ENCODE measurements at regions of chr2 and their contacts with region 1.

Region 1: GRCh38 chr2:61898810-61899209 is 6.7 kb upstream of the COMMD1 start:
- DNase-seq: peak; percentile 29
- H3K4me3 Mint-ChIP-seq: no peak overlapping the region
- H3K27ac Mint-ChIP-seq: no peak overlapping the region
- H3K4me1 Mint-ChIP-seq: no peaks in the 10 kb centered on the region
- H3K27me3 Mint-ChIP-seq: no peaks in the 10 kb centered on the region
- CTCF ChIP-seq: peak; percentile 37

Region 2: DNA sequence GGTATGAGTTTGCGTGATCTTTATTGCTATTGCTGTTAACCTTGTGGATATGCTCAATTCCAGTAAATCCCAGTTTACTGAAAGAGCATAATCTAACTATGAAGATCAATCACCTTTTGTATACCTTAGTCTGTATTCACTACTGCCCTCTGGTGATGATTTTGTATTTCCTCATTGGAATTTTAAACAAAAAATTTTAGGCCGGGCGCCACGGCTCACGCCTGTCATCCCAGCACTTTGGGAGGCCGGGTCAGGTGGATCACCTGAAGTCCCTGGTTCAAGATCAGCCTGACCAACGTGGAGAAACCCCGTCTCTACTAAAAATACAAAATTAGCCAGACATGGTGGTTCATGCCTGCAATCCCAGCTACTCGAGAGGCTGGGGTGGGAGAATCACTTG is 11.8 kb after region 1 on chr2:
- CTCF ChIA-PET with region 1: interaction called, 11 read pairs
- POLR2A ChIA-PET with region 1: interaction called, 6 read pairs
- intact Hi-C with region 1: no loop called
- DNase-seq: peak; percentile 38
- H3K4me3 Mint-ChIP-seq: no peak overlapping the region
- H3K27ac Mint-ChIP-seq: no peak overlapping the region
- H3K4me1 Mint-ChIP-seq: no peaks in the 10 kb centered on the region
- H3K27me3 Mint-ChIP-seq: no peaks in the 10 kb centered on the region
- CTCF ChIP-seq: no peak